Gastrocnemius medialis (tissue), 4 donors: ENCODE measurements at regions of chr15 and their contacts with region 1.

Region 1: DNA sequence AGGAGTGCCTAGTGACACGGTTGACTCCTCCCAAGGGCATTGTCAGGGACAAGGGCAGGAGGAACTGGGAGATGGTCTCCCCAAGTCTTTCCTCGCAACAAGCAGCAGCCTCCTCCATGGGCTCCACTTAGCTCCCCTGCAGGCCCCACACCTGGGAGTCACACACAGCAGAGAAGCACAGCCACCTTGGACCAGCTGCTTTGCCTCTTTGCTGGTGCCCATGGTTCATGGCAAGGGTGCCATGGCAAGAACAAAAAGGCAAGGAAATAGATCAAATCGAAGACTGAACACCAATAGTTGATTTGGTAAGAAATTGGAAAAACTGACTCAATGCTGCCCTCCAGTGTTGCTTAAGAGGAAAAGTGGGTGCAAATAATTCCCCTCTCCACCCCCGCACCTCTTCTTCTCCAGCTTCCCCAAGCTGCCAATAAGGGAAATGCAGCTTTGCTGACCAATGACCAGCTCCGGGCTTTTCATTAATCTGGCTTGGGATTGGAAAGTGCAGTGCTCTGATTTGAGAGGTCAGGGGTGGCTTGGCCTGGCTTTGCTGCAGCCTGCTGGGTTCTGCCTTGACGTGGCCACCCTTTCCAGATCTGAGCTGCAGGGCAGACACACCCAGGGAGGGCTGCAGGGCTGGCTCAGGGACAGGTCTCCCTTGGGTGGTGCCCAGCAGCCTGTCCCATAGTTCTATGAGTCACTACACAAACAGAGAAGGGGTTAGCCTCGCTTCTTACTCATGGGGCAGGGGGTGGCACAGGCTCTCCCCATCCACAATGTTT is 162.0 kb downstream of the KLF13 start:
- DNase-seq: peak; percentile 29 to 43
- ATAC-seq: peak; percentile 61 to 70
- H3K4me3 ChIP-seq: no peak overlapping the region
- H3K27ac ChIP-seq: no peak overlapping the region
- H3K4me1 ChIP-seq: peaks cover 8 to 21% of the 10 kb centered on the region in 2 donors
- H3K27me3 ChIP-seq: peaks cover 0 to 3% (median 0%) of the 10 kb centered on the region in 3 donors
- CTCF ChIP-seq: peak; percentile 74 to 89 (median 80)
- POLR2A ChIP-seq: no peak

Region 2: GRCh38 chr15:30670056-30670455 is 818.6 kb before region 1 on chr15:
- in situ Hi-C with region 1: no loop called
- intact Hi-C with region 1: loop called (anchors 10 kb)
- DNase-seq: no peak
- ATAC-seq: no peak
- H3K4me3 ChIP-seq: no peak overlapping the region
- H3K27ac ChIP-seq: no peak overlapping the region
- H3K4me1 ChIP-seq: no peaks in the 10 kb centered on the region
- H3K27me3 ChIP-seq: no peaks in the 10 kb centered on the region
- CTCF ChIP-seq: no peak
- POLR2A ChIP-seq: no peak

Region 3: GRCh38 chr15:31200735-31201151 is 287.9 kb before region 1 on chr15:
- in situ Hi-C with region 1: loop called in 2 of 4 experiments (anchors 5 to 10 kb)
- intact Hi-C with region 1: loop called (anchors 1 kb)
- DNase-seq: peak; percentile 70
- ATAC-seq: peak; percentile 92 to 95
- H3K4me3 ChIP-seq: no peak overlapping the region
- H3K27ac ChIP-seq: no peak overlapping the region
- H3K4me1 ChIP-seq: no peaks in the 10 kb centered on the region
- H3K27me3 ChIP-seq: no peaks in the 10 kb centered on the region
- CTCF ChIP-seq: peak; percentile 27 to 65 (median 55)
- POLR2A ChIP-seq: no peak

Region 4: GRCh38 chr15:31311735-31312619 is 176.6 kb before region 1 on chr15:
- in situ Hi-C with region 1: loop called in 1 of 4 experiments (anchors 10 kb)
- intact Hi-C with region 1: no loop called
- DNase-seq: peak in 1 of 2 donors; percentile 4
- ATAC-seq: no peak
- H3K4me3 ChIP-seq: no peak overlapping the region
- H3K27ac ChIP-seq: no peak overlapping the region
- H3K4me1 ChIP-seq: no peaks in the 10 kb centered on the region
- H3K27me3 ChIP-seq: peaks cover 0 to 4% (median under 1%) of the 10 kb centered on the region in 3 donors
- CTCF ChIP-seq: no peak
- POLR2A ChIP-seq: no peak

Region 5: GRCh38 chr15:31427411-31427810 is 61.2 kb before region 1 on chr15:
- in situ Hi-C with region 1: loop called in 1 of 4 experiments (anchors 10 kb)
- intact Hi-C with region 1: no loop called
- DNase-seq: no peak
- ATAC-seq: no peak
- H3K4me3 ChIP-seq: no peak overlapping the region
- H3K27ac ChIP-seq: no peak overlapping the region
- H3K4me1 ChIP-seq: no peaks in the 10 kb centered on the region
- H3K27me3 ChIP-seq: no peaks in the 10 kb centered on the region
- CTCF ChIP-seq: no peak
- POLR2A ChIP-seq: no peak

Region 6: DNA sequence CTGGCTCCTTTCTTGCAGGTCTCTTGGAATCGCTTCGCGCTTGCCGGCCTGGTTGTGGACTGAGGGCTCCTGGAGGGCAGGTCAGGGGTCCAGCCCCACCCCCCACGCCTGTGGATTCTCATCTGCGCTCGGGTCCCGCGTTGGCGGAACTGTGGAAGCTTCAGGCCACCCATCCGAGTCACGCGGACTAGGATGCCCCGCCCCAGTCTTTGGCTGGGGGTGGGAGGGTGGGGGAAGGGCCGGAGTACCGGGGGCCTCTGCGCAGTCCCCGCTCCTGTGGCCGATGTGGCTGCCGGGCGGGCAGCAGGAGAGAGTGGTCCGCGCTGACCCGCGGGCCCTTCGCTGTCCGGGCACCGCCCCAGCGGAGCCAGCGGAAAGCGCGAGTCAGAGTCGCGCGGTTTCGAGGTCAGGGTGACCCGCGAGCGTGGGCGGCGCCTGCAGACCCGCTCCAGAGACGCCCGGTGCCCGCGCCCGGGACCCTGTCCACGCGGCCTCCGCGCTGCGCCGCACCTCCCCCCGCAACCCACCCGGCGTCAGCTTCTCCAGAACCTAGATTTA is 47.8 kb before region 1 on chr15:
- in situ Hi-C with region 1: no loop called
- intact Hi-C with region 1: loop called (anchors 2 kb)
- DNase-seq: peak in 1 of 2 donors; percentile 57
- ATAC-seq: peak; percentile 66 to 67
- H3K4me3 ChIP-seq: peak overlapping the region; percentile 63 to 94 (median 73)
- H3K27ac ChIP-seq: peak overlapping the region; percentile 62 to 79 (median 76)
- H3K4me1 ChIP-seq: peaks cover 6 to 14% of the 10 kb centered on the region in 2 donors
- H3K27me3 ChIP-seq: no peaks in the 10 kb centered on the region
- CTCF ChIP-seq: no peak
- POLR2A ChIP-seq: peak; percentile 15 to 34